Naive thymus-derived CD4-positive, alpha-beta T cell (primary cell): ENCODE measurements at regions of chr1 and their contacts with region 1.

Region 1: DNA sequence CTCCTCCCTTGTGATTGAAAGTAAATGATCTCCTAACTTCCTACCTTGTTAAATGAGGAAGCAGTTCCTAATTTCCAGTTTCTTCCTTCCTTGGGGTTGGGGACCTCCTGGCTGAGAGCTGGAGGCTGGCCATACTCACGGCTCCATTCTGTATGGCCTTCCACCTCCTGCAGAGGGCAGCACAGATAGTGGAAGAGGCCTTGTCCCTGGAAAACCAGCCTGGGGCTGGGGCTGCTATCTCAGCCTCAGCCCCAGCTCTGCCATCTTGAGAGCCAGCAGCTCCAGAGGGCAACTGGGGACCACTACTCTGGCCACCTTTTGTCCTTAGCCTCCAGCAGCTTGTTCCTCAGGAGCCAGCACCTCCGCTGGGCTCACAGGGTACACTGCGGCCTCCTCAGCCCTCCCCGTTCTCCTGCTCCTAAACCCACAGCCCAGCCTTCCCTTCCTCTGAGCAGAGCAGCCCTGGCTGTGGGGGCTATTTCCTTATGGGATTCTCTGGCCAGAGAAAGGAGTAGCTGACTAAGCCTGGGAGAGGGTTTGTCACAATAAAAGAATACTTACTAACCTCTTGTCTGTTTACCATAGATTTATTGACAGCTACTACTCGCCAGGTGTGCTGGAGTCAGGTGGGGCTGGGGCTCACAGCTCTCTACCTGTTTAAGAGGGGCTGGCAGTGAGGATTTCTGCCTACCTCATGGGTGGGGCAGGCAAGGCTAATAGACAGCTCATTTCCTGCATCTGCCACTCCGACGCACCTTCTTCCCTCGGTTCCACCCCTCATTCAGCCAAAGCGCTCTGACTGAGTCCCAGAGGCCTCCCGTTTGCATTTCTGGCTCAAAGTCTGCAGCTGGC is 6.3 kb downstream of the TMEM234 start:
- DNase-seq: peak in 8 of 9 donors; percentile 29 to 63 (median 52)
- ATAC-seq: peak; percentile 92
- H3K4me3 ChIP-seq: no peak overlapping the region
- H3K4me3 Mint-ChIP-seq: peak overlapping the region in 6 of 10 donors; percentile 7 to 43 (median 32)
- H3K27ac ChIP-seq: peak overlapping the region; percentile 59
- H3K27ac Mint-ChIP-seq: peak overlapping the region; percentile 25 to 86 (median 63)
- H3K4me1 ChIP-seq: peaks cover under 1 to 12% of the 10 kb centered on the region in 2 donors
- H3K4me1 Mint-ChIP-seq: peaks cover 12 to 31% (median 24%) of the 10 kb centered on the region in 7 donors
- H3K27me3 ChIP-seq: no peaks in the 10 kb centered on the region
- H3K27me3 Mint-ChIP-seq: no peaks in the 10 kb centered on the region

Region 2: GRCh38 chr1:32205401-32206370 is 10.2 kb before region 1 on chr1 and contains the start of gene IQCC:
- CTCF ChIA-PET with region 1: interaction called, 10 read pairs
- POLR2A ChIA-PET with region 1: interaction called, 16 read pairs
- intact Hi-C with region 1: no loop called
- DNase-seq: peak; percentile 77 to 89 (median 83)
- ATAC-seq: peak; percentile 77
- H3K4me3 ChIP-seq: peak within 1 kb of the TSS; percentile 81
- H3K4me3 Mint-ChIP-seq: peak within 1 kb of the TSS; percentile 80 to 91 (median 88)
- H3K27ac ChIP-seq: peak within 1 kb of the TSS; percentile 80
- H3K27ac Mint-ChIP-seq: peak within 1 kb of the TSS; percentile 42 to 95 (median 86)
- H3K4me1 ChIP-seq: peaks cover 18 to 28% of the 10 kb centered on the region in 2 donors
- H3K4me1 Mint-ChIP-seq: peaks cover 17 to 45% (median 33%) of the 10 kb centered on the region in 7 donors
- H3K27me3 ChIP-seq: no peaks in the 10 kb centered on the region
- H3K27me3 Mint-ChIP-seq: no peaks in the 10 kb centered on the region
- total RNA-seq, gene IQCC: 2.3 to 4.6 (median 2.5) TPM

Region 3: DNA sequence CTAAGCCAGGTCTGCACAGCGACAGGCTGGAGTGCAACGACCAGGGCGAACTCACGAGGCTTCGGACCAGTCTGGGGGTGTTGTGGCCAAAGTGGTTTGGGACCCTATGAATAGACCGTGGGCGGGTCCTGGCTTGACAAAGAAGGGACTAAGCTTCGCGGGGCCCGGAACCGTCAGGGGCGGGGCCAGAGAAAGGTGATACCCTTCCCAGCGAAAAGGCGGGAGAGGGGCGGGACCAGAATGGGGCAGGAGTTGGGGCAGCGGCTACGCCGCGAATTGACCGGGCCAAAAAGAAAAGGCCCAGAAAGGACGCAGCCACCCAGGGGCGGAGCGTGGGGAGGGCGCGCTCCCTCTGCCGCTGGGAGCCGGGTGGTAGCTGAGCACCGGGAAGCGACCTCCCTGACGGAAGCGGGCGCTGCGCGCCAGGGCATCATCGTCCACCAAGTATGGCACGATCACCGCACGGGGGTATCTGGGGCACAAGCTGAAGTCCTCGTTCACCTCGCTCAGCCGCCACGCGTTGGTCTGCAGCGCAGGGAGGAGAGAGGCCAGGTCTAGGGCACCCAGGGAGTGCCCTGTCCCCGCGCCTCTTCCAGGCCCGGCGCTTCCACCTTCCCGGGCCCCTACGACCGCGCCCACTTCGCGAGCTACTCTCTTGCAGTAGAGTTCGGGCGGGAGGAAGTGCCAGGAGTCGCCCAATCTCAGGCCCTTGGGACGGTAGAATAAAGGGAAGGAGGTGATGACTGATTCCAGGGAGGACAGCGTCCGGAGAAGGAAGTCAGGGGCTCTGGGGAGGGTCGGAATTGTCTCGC is 24.5 kb after region 1 on chr1:
- CTCF ChIA-PET with region 1: interaction called, 15 read pairs
- POLR2A ChIA-PET with region 1: no interaction called
- intact Hi-C with region 1: loop called in 1 of 2 experiments (anchors 1 kb)
- DNase-seq: peak in 7 of 9 donors; percentile 33 to 73 (median 57)
- ATAC-seq: peak; percentile 78
- H3K4me3 ChIP-seq: peak overlapping the region; percentile 94
- H3K4me3 Mint-ChIP-seq: peak overlapping the region; percentile 87 to 93 (median 91)
- H3K27ac ChIP-seq: peak overlapping the region; percentile 68
- H3K27ac Mint-ChIP-seq: peak overlapping the region in 8 of 9 donors; percentile 40 to 92 (median 83)
- H3K4me1 ChIP-seq: peaks cover 8 to 17% of the 10 kb centered on the region in 2 donors
- H3K4me1 Mint-ChIP-seq: peaks cover 6 to 31% (median 22%) of the 10 kb centered on the region in 7 donors
- H3K27me3 ChIP-seq: no peaks in the 10 kb centered on the region
- H3K27me3 Mint-ChIP-seq: no peaks in the 10 kb centered on the region

Region 4: DNA sequence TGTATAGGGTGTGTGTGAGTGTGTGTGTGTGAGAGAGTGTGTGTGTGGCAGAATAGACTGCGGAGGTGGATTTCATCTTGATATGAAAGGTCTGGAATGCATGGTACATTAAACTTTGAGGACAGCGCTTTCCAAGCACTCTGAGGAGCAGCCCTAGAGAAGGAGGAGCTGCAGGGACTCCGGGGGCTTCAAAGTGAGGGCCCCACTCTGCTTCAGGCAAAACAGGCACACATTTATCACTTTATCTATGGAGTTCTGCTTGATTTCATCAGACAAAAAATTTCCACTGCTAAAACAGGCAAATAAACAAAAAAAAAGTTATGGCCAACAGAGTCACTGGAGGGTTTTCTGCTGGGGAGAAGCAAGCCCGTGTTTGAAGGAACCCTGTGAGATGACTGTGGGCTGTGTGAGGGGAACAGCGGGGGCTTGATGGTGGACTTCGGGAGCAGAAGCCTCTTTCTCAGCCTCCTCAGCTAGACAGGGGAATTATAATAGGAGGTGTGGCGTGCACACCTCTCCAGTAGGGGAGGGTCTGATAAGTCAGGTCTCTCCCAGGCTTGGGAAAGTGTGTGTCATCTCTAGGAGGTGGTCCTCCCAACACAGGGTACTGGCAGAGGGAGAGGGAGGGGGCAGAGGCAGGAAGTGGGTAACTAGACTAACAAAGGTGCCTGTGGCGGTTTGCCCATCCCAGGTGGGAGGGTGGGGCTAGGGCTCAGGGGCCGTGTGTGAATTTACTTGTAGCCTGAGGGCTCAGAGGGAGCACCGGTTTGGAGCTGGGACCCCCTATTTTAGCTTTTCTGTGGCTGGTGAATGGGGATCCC is 57.7 kb after region 1 on chr1:
- CTCF ChIA-PET with region 1: interaction called, 4 read pairs
- POLR2A ChIA-PET with region 1: interaction called, 10 read pairs
- intact Hi-C with region 1: no loop called
- DNase-seq: peak; percentile 34 to 96 (median 88)
- ATAC-seq: peak; percentile 94
- H3K4me3 ChIP-seq: peak overlapping the region; percentile 49
- H3K4me3 Mint-ChIP-seq: peak overlapping the region; percentile 74 to 91 (median 88)
- H3K27ac ChIP-seq: peak overlapping the region; percentile 79
- H3K27ac Mint-ChIP-seq: peak overlapping the region; percentile 77 to 99 (median 97)
- H3K4me1 ChIP-seq: peaks cover 42 to 69% of the 10 kb centered on the region in 2 donors
- H3K4me1 Mint-ChIP-seq: peaks cover 45 to 86% (median 62%) of the 10 kb centered on the region in 7 donors
- H3K27me3 ChIP-seq: no peaks in the 10 kb centered on the region
- H3K27me3 Mint-ChIP-seq: no peaks in the 10 kb centered on the region

Region 5: GRCh38 chr1:32372149-32372756 is 156.4 kb after region 1 on chr1:
- CTCF ChIA-PET with region 1: interaction called, 21 read pairs
- POLR2A ChIA-PET with region 1: interaction called, 10 read pairs
- intact Hi-C with region 1: loop called (anchors 1 kb)
- DNase-seq: peak; percentile 22 to 78 (median 68)
- ATAC-seq: peak; percentile 88
- H3K4me3 ChIP-seq: no peak overlapping the region
- H3K4me3 Mint-ChIP-seq: peak overlapping the region in 2 of 10 donors; percentile 6 to 9
- H3K27ac ChIP-seq: peak overlapping the region; percentile 20
- H3K27ac Mint-ChIP-seq: peak overlapping the region in 7 of 9 donors; percentile 1 to 75 (median 57)
- H3K4me1 ChIP-seq: peaks cover 12% of the 10 kb centered on the region in 2 donors
- H3K4me1 Mint-ChIP-seq: peaks cover 15 to 22% (median 20%) of the 10 kb centered on the region in 7 donors
- H3K27me3 ChIP-seq: no peaks in the 10 kb centered on the region
- H3K27me3 Mint-ChIP-seq: no peaks in the 10 kb centered on the region

Region 6: GRCh38 chr1:32464716-32465577 is 249.1 kb after region 1 on chr1 and contains the start of gene ZBTB8B:
- CTCF ChIA-PET with region 1: no interaction called
- POLR2A ChIA-PET with region 1: no interaction called
- intact Hi-C with region 1: no loop called
- DNase-seq: peak in 8 of 9 donors; percentile 7 to 26 (median 13)
- ATAC-seq: peak; percentile 50
- H3K4me3 ChIP-seq: peak within 1 kb of the TSS; percentile 26
- H3K4me3 Mint-ChIP-seq: peak within 1 kb of the TSS; percentile 50 to 88 (median 83)
- H3K27ac ChIP-seq: no peak within 1 kb of the TSS
- H3K27ac Mint-ChIP-seq: no peak within 1 kb of the TSS
- H3K4me1 ChIP-seq: peaks cover 8 to 13% of the 10 kb centered on the region in 2 donors
- H3K4me1 Mint-ChIP-seq: peaks cover 6 to 18% (median 14%) of the 10 kb centered on the region in 7 donors
- H3K27me3 ChIP-seq: peaks cover 0 to 11% of the 10 kb centered on the region in 2 donors
- H3K27me3 Mint-ChIP-seq: peaks cover 48 to 62% (median 56%) of the 10 kb centered on the region in 5 donors
- total RNA-seq, gene ZBTB8B: 0.02 TPM in 1 of 5 experiments, not detected in the others